ENCODE measurements at regions of chr12 and their contacts with region 1.

Region 1: DNA sequence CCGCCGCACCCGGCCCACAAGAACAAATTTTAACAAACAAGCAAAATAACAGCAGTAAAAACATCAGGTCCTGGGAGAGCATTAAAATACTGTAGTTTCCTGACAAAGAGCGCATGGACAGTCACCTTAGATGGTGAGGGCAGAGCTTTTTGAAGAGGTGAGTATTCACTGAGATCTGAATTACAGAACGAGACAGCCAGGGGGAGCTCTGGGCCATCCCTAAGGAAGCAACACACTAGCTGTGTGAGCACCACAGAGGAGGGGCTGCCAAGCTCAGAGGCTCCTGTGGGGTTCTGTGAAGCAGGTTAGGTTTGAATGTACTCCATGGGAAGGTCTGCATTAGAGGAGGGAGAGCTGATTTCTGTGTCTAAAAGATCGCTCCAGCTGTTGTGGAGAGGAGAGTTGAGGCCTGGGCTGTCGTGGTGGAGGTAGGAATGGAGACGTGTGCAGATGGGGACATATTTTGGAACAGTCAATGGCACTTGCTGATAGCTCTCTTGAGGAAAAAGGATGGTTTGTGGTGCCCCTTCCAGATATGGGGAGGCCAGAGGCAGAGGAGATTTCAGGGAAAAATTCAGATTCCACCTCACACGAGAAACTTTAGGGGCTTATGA is 72.9 kb downstream of the TRAFD1 start:
- DNase-seq: no peak
- ATAC-seq: peak; percentile 99
- H3K4me3 ChIP-seq: no peak overlapping the region
- H3K27ac ChIP-seq: no peak overlapping the region
- H3K4me1 ChIP-seq: no peaks in the 10 kb centered on the region
- H3K27me3 ChIP-seq: no peaks in the 10 kb centered on the region
- CTCF ChIP-seq: peak; percentile 67 to 72 (median 71)
- EP300 ChIP-seq: no peak
- POLR2A ChIP-seq: no peak
- RAD21 ChIP-seq: peak; percentile 76

Region 2: DNA sequence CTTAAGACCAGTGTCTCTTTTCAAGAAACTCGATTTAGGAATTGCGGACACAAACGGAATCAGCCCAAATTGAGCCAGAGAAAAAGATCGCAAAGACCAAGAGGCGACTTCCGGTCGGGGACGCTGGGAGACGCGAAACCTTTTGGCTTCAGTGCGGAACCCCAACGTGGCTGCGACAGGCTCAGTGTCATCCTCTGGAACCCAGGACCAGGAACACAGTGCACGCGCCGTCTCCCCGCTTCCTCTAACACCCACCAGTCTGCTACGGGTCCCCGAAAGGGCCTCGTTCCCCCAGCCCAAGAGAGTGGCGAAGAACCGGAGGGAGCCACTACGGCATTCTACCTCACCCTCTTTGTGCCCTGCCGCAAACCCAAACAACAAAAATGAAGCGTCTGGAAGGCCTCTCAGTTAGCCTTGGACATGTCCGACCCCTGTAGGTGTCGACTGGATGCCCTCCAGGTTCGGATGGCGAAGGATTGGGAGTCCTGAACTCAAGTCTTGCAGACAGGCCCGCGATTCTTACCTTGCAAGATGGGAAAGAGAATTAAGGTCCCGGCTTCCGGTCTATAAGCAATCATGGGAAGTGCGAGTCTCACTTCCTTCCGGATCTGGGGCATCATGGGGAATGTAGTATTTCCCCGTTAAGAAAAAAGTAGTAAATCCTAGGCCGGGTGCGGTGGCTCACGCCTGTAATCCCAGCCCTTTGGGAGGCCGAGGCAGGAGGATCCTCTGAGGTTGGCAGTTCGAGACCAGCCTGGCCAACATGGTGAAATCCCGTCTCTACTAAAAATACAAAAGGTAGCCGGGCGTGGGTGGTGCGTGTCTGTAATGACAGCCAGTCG is 211.1 kb after region 1 on chr12 and contains the start of gene RPL6:
- CTCF ChIA-PET with region 1: interaction called, 31 read pairs
- POLR2A ChIA-PET with region 1: no interaction called
- RAD21 ChIA-PET with region 1: no interaction called
- SMC1A ChIA-PET with region 1: interaction called, 21 read pairs
- in situ Hi-C with region 1: no loop called
- intact Hi-C with region 1: loop called (anchors 2 kb)
- DNase-seq: peak; percentile 79
- ATAC-seq: peak; percentile 88
- H3K4me3 ChIP-seq: peak within 1 kb of the TSS; percentile 95
- H3K27ac ChIP-seq: peak within 1 kb of the TSS; percentile 97
- H3K4me1 ChIP-seq: no peaks in the 10 kb centered on the region
- H3K27me3 ChIP-seq: no peaks in the 10 kb centered on the region; a peak in 1 of 4 replicates
- CTCF ChIP-seq: no peak
- EP300 ChIP-seq: no peak
- POLR2A ChIP-seq: peak; percentile 94
- RAD21 ChIP-seq: no peak
- polyA plus RNA-seq, gene RPL6: 1,828 to 2,204 TPM

Measured in GM12878 (cell line).